Colonic mucosa (tissue), 4 donors: ENCODE measurements at regions of chr1 and their contacts with region 1.

Region 1: GRCh38 chr1:76154206-76154956 is 79.8 kb downstream of the ST6GALNAC3 start:
- DNase-seq: peak; percentile 84
- H3K4me3 ChIP-seq: peak overlapping the region; percentile 22
- H3K27ac ChIP-seq: peak overlapping the region; percentile 14
- H3K4me1 ChIP-seq: no peaks in the 10 kb centered on the region
- H3K27me3 ChIP-seq: no peaks in the 10 kb centered on the region
- CTCF ChIP-seq: peak; percentile 100

Region 2: GRCh38 chr1:75991497-75992114 is 162.8 kb before region 1 on chr1:
- intact Hi-C with region 1: loop called (anchors 5 kb)
- DNase-seq: peak; percentile 92
- H3K4me3 ChIP-seq: no peak overlapping the region
- H3K27ac ChIP-seq: no peak overlapping the region
- H3K4me1 ChIP-seq: no peaks in the 10 kb centered on the region
- H3K27me3 ChIP-seq: no peaks in the 10 kb centered on the region
- CTCF ChIP-seq: peak; percentile 71

Region 3: DNA sequence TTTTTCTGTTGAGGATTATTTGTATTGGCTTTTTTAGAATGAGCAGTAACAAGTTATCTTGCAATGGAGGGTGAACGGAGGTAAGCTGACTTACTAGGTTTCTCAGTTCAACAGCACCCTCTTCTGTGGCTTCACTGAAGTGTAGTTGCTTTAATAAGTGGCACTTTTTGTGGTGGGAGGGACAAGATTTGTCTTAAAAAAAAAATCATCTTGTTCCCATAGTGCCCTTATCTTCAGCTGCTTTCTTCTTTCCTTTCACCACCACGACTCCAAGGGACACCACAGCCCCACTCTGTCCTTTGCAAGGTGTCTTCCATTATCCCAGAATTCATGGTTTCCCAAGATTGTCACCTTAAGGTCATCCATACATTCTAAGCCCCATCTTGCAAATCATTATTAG is 971.9 kb after region 1 on chr1:
- intact Hi-C with region 1: loop called (anchors 5 kb)
- DNase-seq: no peak
- H3K4me3 ChIP-seq: no peak overlapping the region
- H3K27ac ChIP-seq: no peak overlapping the region
- H3K4me1 ChIP-seq: no peaks in the 10 kb centered on the region
- H3K27me3 ChIP-seq: no peaks in the 10 kb centered on the region
- CTCF ChIP-seq: peak; percentile 29